Posterior cingulate gyrus (tissue), 11 donors: ENCODE measurements at regions of chr2 and their contacts with region 1.

Region 1: GRCh38 chr2:237744613-237745249 is 53.8 kb upstream of the RBM44 start:
- DNase-seq: peak; percentile 52 to 97 (median 90)

Region 2: GRCh38 chr2:237512774-237513466 is 231.8 kb before region 1 on chr2:
- intact Hi-C with region 1: loop called (anchors 10 kb)
- DNase-seq: peak; percentile 73 to 98 (median 83)

Region 3: GRCh38 chr2:237581751-237582746 is 162.7 kb before region 1 on chr2:
- intact Hi-C with region 1: loop called (anchors 1 kb)
- DNase-seq: peak in 7 of 10 donors; percentile 19 to 91 (median 58)

Region 4: GRCh38 chr2:237650455-237650850 is 94.3 kb before region 1 on chr2:
- intact Hi-C with region 1: no loop called
- DNase-seq: peak in 1 of 10 donors; percentile 36

Region 5: DNA sequence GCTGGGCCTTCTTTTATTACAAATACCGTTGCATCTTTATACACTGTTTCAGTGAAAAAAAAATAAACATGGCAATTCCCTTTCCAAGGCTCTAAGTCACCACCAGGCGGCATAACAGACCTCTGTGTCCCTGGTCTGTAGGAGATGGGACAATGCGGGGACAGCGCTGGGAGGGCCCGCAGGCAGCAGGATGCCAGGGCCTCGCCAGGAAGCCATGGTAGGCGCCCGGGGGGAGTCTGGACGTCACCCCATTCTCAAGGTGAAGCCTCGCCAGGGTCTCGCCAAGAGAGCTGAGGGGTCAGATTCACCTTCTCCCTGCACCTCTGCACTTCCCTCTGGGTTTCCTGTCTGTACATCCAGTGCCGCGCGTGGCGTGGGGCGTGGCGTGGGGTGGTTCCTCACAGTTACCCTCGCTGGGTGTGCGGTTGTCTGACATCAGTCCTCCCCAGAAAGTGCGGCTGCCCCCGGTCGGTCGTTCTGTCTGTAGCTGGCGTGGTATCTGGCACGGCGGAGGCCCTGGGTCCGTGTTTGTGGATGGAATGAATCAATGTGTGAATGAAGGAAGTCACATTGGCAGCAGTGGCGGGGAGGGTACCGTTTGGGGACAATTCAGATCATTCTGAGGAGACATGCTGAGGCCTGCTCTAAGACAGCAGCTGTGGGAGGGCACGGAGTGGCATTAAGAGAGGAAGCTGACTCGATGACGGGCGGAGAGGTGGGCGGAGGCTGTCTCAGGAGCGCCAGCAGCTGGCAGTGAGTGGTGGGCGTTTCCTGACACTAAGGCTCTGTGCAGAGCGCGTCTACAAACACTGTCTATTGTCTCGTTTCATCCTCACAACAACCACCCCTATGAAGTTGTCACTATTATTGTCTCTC is 71.4 kb before region 1 on chr2:
- intact Hi-C with region 1: loop called (anchors 1 kb)
- DNase-seq: peak; percentile 41 to 94 (median 70)

Region 6: DNA sequence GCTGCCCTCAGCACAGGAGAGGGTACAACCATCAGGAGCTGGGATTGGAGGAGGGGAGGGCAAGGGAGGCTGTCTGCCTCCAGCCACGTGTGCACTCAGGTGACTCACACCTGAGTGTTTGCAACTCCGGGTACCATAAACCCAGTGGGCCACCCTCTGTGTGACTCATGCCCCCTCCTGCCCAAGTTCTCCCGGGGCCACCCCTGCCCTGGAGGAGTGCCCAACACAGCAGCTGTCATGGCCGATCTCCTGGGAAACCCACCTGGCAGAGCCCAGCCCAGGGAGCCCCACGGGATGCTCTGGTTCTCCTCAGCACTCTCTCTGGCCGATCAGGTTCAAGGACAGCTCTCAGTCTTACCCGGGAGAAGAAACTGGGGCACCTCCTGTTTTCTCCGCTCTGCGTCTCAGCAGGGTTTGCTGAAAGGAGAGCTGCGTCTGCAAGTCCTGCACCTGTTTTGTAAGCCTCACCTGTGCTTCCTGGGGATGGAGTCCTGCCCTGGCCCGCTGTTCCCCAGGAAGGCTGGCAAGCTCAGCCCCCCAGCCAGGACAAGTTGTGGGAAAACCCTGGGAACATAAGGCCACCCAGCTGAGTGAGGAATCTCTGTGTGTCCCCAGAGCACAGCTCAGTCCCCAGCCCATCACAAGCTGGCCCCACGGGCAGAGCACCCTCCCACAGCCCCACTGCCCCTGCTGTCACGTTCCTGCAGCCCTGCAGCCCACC is 178.1 kb after region 1 on chr2:
- intact Hi-C with region 1: no loop called
- DNase-seq: peak in 3 of 10 donors; percentile 59 to 73 (median 71)

Region 7: GRCh38 chr2:238203094-238203972 is 458.6 kb after region 1 on chr2 and contains the start of gene ILKAP:
- intact Hi-C with region 1: no loop called
- DNase-seq: peak; percentile 73 to 98 (median 86)